Calu3 (cell line): ENCODE measurements at regions of chr15 and their contacts with region 1.

Region 1: GRCh38 chr15:39580117-39580484 is 778 bp upstream of the THBS1 start:
- DNase-seq: peak; percentile 90
- H3K4me3 Mint-ChIP-seq: peak overlapping the region; percentile 75
- H3K27ac Mint-ChIP-seq: peak overlapping the region; percentile 94
- H3K4me1 Mint-ChIP-seq: peaks cover 9% of the 10 kb centered on the region
- H3K27me3 Mint-ChIP-seq: no peaks in the 10 kb centered on the region
- CTCF ChIP-seq: peak; percentile 63

Region 2: GRCh38 chr15:38817427-38818156 is 762.5 kb before region 1 on chr15:
- CTCF ChIA-PET with region 1: no interaction called
- intact Hi-C with region 1: loop called (anchors 5 kb)
- DNase-seq: peak; percentile 89
- H3K4me3 Mint-ChIP-seq: no peak overlapping the region
- H3K27ac Mint-ChIP-seq: no peak overlapping the region
- H3K4me1 Mint-ChIP-seq: no peaks in the 10 kb centered on the region
- H3K27me3 Mint-ChIP-seq: no peaks in the 10 kb centered on the region
- CTCF ChIP-seq: peak; percentile 69

Region 3: DNA sequence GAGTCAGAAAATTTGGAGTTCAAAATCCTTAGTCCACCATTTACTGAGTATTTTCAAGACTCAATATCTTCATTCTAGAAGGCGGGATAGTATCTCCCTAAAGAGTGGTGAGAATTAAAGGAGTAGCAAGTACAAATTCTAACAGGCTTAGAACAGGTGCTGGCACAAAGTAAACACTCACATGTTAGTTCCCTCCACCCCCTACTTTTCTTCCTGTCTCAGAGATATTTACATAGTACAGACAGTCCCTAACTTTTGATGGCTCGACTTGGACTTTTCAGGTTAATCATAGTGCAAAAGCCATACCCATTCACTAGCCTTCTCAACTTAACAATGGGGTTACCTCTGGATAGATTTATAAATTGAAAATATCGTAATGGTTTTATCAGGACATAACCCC is 539.2 kb before region 1 on chr15:
- CTCF ChIA-PET with region 1: no interaction called
- intact Hi-C with region 1: no loop called
- DNase-seq: no peak
- H3K4me3 Mint-ChIP-seq: no peak overlapping the region
- H3K27ac Mint-ChIP-seq: no peak overlapping the region
- H3K4me1 Mint-ChIP-seq: no peaks in the 10 kb centered on the region
- H3K27me3 Mint-ChIP-seq: no peaks in the 10 kb centered on the region
- CTCF ChIP-seq: no peak

Region 4: GRCh38 chr15:39125904-39126303 is 454.2 kb before region 1 on chr15:
- CTCF ChIA-PET with region 1: no interaction called
- intact Hi-C with region 1: loop called (anchors 5 kb)
- DNase-seq: peak; percentile 42
- H3K4me3 Mint-ChIP-seq: no peak overlapping the region
- H3K27ac Mint-ChIP-seq: no peak overlapping the region
- H3K4me1 Mint-ChIP-seq: peaks cover 23% of the 10 kb centered on the region
- H3K27me3 Mint-ChIP-seq: no peaks in the 10 kb centered on the region
- CTCF ChIP-seq: peak; percentile 21

Region 5: DNA sequence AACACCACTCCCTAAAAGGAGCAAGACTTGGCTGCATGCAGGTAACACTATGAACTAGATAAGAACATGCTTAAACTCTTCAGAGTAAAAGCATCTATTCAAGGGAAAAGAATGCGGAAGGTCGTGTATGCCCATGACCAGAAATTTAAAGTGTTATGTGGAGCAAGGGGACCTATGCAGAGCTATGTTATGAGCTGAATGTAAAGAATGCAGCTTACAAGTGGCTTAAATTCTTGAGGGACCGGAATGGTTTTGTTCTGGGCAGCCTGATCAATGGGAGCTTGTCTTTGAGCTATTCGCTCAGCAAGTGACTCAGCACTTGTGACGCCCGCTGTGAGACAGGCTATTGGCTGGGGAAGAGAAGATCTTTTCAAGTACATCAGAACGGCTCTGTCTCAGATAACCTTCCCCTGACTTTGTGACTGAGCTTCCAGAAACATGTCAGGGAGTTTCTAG is 366.7 kb before region 1 on chr15:
- CTCF ChIA-PET with region 1: interaction called, 7 read pairs
- intact Hi-C with region 1: loop called (anchors 1 kb)
- DNase-seq: peak; percentile 71
- H3K4me3 Mint-ChIP-seq: peak overlapping the region; percentile 39
- H3K27ac Mint-ChIP-seq: peak overlapping the region; percentile 93
- H3K4me1 Mint-ChIP-seq: peaks cover 26% of the 10 kb centered on the region
- H3K27me3 Mint-ChIP-seq: no peaks in the 10 kb centered on the region
- CTCF ChIP-seq: no peak

Region 6: DNA sequence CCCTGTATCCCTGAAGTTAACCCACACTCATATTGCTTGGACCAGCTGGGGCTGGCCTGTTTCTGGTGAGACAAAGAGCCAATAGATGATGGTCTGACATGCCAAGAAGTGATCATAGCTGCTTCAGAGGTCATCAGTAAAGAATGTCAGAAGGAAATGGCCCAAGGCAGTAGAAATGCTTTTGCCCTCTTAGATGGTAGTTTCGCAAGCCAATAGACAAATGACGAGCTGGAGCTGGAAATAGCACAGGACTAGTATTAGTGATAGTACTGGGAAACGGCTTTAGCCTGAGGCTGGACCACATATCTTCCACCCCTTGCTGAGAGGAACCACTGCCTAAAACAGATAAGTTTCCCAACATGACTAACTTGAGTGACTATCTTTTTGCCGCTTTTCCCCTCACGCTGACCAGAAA is 175.3 kb before region 1 on chr15:
- CTCF ChIA-PET with region 1: no interaction called
- intact Hi-C with region 1: loop called (anchors 10 kb)
- DNase-seq: no peak
- H3K4me3 Mint-ChIP-seq: no peak overlapping the region
- H3K27ac Mint-ChIP-seq: no peak overlapping the region
- H3K4me1 Mint-ChIP-seq: peaks cover 19% of the 10 kb centered on the region
- H3K27me3 Mint-ChIP-seq: no peaks in the 10 kb centered on the region
- CTCF ChIP-seq: no peak